ENCODE measurements at regions of chr12 and their contacts with region 1.

Region 1: GRCh38 chr12:72889791-72890190 is 617.6 kb downstream of the TRHDE start:
- DNase-seq: no peak
- ATAC-seq: no peak
- H3K4me3 Mint-ChIP-seq: no peak overlapping the region
- H3K27ac Mint-ChIP-seq: no peak overlapping the region
- H3K4me1 Mint-ChIP-seq: no peaks in the 10 kb centered on the region
- H3K27me3 Mint-ChIP-seq: no peaks in the 10 kb centered on the region

Region 2: GRCh38 chr12:72570602-72571001 is 319.2 kb before region 1 on chr12:
- CTCF ChIA-PET with region 1: no interaction called
- POLR2A ChIA-PET with region 1: no interaction called
- intact Hi-C with region 1: no loop called
- DNase-seq: peak; percentile 4
- ATAC-seq: no peak
- H3K4me3 Mint-ChIP-seq: no peak overlapping the region
- H3K27ac Mint-ChIP-seq: no peak overlapping the region
- H3K4me1 Mint-ChIP-seq: no peaks in the 10 kb centered on the region
- H3K27me3 Mint-ChIP-seq: no peaks in the 10 kb centered on the region

Region 3: GRCh38 chr12:72872238-72872887 is 17.4 kb before region 1 on chr12:
- CTCF ChIA-PET with region 1: no interaction called
- POLR2A ChIA-PET with region 1: no interaction called
- intact Hi-C with region 1: loop called in 1 of 2 experiments (anchors 2 kb)
- DNase-seq: no peak
- ATAC-seq: no peak
- H3K4me3 Mint-ChIP-seq: no peak overlapping the region
- H3K27ac Mint-ChIP-seq: no peak overlapping the region
- H3K4me1 Mint-ChIP-seq: no peaks in the 10 kb centered on the region
- H3K27me3 Mint-ChIP-seq: no peaks in the 10 kb centered on the region

Region 4: DNA sequence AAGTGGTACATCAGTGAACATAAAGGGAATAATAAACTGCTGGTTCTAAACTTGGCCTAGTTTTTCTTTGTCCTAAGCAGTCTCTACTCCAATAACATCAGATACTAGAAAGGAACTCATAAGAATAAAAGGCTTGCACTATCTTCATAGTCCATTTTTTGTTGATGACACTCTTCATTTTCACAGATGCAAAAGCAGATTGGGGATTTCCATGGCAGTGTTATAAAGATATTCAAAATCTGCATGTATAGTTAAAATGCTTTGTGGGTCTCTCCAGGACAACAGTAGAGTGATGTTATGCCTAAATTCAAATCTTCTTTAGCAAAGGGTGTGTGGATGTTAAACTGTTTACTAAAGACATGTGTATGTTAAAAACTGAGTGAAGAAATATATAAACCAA is 128.2 kb after region 1 on chr12:
- CTCF ChIA-PET with region 1: no interaction called
- POLR2A ChIA-PET with region 1: no interaction called
- intact Hi-C with region 1: no loop called
- DNase-seq: no peak
- ATAC-seq: no peak
- H3K4me3 Mint-ChIP-seq: no peak overlapping the region
- H3K27ac Mint-ChIP-seq: no peak overlapping the region
- H3K4me1 Mint-ChIP-seq: no peaks in the 10 kb centered on the region
- H3K27me3 Mint-ChIP-seq: no peaks in the 10 kb centered on the region